ENCODE measurements at regions of chrX and their contacts with region 1.

Region 1: DNA sequence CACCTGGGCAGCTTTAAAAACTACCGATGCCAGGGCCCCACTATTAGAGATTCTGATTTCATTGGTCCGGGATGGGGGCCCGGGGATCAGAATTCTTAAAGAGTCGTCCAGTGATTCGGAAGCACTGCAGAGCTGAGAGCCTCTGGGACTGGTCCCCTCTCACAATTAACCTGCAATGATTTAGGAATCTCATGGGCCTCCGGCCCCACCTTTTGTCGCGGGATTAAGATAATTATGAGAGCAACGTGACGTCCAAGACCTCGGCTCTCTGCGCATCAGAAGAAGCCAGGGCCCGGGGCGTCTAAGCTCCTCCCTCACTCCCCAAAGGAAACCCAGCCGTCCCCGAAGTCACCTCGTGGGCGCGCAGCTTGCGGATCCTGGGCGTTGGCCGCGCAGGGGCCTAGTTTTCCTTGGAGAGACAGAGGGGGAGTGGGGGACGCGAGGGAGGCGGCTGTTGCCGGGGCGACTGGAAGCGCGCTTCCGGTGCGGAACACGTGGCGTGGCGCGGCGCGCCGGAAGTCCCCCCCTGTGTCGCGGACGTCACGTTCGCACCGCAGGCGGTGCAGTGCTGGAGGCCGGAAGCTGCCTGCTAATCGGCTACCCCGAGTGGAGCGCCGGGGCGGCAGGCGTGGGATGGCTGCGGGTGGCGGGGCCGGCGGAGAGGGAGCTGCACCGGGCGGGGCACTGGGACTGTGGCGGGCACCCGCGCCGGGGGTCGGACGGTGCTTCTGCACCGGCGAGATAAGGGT is at the start of gene GEMIN8:
- DNase-seq: peak; percentile 82
- H3K4me3 Mint-ChIP-seq: peak within 1 kb of the TSS; percentile 98
- H3K27ac Mint-ChIP-seq: peak within 1 kb of the TSS; percentile 99
- H3K4me1 Mint-ChIP-seq: peaks cover 30% of the 10 kb centered on the region
- H3K27me3 Mint-ChIP-seq: no peaks in the 10 kb centered on the region
- total RNA-seq, gene GEMIN8: 4.7 to 5.1 TPM

Region 2: DNA sequence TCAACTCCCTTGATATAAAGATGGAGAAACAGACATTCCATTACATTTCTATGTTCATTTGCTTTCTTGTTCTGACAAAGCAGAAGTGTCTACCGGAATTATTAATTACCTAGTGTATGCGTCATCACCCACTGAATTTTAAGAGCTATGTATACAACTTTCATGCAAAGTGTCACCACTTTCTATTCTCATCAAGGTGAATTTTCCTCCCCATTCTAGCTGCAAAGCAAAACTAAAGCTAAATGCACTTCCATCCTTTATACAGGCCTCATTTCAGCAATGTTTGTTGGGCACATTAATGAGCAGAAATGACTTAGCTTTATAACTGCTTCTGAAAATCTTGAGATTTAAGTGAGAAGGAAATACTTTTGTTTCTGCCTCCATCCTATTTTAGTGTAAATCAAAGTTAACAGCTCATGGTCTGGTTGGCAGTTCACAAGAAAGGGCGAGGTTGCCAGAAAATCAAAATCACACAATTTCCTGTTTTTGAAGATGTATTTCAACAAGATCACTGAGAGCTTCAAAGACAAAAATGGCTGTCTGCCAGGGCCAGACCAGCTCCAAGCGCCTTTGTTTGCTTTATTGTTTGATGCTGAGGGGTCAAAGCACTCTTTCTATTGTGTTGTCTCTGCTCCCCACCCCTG is 977.9 kb before region 1 on chrX:
- CTCF ChIA-PET with region 1: no interaction called
- intact Hi-C with region 1: loop called (anchors 5 kb)
- DNase-seq: peak; percentile 43
- H3K4me3 Mint-ChIP-seq: peak overlapping the region; percentile 36
- H3K27ac Mint-ChIP-seq: peak overlapping the region; percentile 95
- H3K4me1 Mint-ChIP-seq: peaks cover 77% of the 10 kb centered on the region
- H3K27me3 Mint-ChIP-seq: no peaks in the 10 kb centered on the region

Region 3: DNA sequence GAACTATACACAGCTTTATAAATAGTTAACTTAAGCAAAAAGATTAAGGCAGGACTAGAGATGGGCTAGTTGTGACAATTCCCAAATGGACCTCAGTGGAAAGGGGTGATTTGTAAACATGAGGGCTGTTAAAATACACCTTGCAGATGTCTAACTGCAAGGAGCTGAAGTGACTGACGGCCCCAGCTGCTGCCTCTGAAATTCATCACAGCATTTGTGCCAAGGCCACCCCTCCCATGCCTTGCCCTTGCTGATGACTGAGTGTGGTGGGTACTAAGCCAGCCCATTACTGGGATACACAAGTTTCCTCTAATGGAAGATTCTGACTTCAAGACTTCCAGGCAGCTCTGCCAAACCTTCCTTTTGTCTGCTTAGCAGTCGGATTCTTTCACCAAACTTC is 483.9 kb before region 1 on chrX:
- CTCF ChIA-PET with region 1: no interaction called
- intact Hi-C with region 1: loop called (anchors 1 kb)
- DNase-seq: no peak
- H3K4me3 Mint-ChIP-seq: no peak overlapping the region
- H3K27ac Mint-ChIP-seq: no peak overlapping the region
- H3K4me1 Mint-ChIP-seq: peaks cover 13% of the 10 kb centered on the region
- H3K27me3 Mint-ChIP-seq: peaks cover 2% of the 10 kb centered on the region

Region 4: DNA sequence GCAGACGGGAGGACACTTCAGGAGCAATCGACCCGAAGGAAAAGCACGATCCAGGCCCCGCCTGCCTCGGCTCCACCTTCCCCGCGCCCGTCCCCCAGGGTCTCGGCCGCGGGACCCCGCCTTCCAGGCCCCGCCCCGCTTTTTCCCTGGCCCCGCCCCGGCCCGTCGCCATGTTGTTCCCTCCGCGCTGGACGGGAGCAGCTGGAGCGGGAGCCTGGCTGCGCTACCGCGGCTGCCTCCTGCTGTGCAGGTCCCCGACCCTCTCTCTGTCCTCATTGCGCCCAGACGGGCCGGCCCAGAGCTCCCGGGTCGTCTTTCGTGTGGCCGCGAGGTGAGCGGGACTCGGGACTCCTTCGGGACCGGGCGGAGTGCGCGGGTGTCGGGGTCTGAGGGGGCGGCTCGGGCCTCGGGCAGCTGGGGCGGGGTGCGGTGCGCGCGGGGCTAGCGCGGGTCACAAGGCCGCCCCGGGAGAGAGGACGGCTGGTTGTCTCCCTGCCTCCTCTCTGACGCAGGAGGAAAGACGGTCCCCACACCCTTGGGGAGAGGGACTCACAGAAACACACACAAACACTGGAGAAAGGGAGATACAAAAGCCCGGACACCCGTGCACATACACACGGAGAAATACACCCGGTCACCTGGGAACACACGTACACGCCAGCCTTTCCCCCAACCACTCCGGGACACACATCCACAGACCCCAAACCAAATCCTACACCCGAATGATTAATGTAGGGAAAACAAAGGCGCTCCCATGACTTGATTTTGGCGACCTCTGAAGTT is 340.4 kb before region 1 on chrX and contains the start of gene RAB9A:
- CTCF ChIA-PET with region 1: no interaction called
- intact Hi-C with region 1: loop called (anchors 1 kb)
- DNase-seq: peak; percentile 83
- H3K4me3 Mint-ChIP-seq: peak within 1 kb of the TSS; percentile 82
- H3K27ac Mint-ChIP-seq: peak within 1 kb of the TSS; percentile 96
- H3K4me1 Mint-ChIP-seq: peaks cover 65% of the 10 kb centered on the region
- H3K27me3 Mint-ChIP-seq: no peaks in the 10 kb centered on the region
- total RNA-seq, gene RAB9A: 22.8 to 23.3 TPM

Region 5: DNA sequence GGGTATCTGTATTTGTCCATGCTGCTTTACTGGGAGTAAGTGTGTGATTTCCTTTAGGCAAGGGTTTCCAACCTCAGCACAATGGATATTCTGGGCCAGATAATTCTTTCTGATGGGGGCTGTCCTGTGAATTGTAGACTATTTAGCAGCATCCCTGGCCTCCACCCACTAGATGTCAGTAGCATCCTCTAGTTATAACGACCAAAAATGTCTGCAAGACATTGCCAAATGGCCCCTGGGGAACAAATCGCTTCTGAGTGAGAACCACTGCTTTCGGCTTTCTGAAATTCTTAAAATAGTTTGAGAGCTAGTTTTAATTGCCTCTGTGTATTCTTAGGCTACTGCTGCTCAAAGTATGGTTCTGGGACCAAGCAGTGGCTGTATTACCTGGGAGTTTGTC is 131.5 kb before region 1 on chrX:
- CTCF ChIA-PET with region 1: interaction called, 7 read pairs
- intact Hi-C with region 1: loop called (anchors 1 kb)
- DNase-seq: peak; percentile 15
- H3K4me3 Mint-ChIP-seq: no peak overlapping the region
- H3K27ac Mint-ChIP-seq: no peak overlapping the region
- H3K4me1 Mint-ChIP-seq: peaks cover 2% of the 10 kb centered on the region
- H3K27me3 Mint-ChIP-seq: no peaks in the 10 kb centered on the region

Region 6: GRCh38 chrX:14872851-14873675 is 843.5 kb after region 1 on chrX and contains the starts of genes FANCB and MOSPD2:
- CTCF ChIA-PET with region 1: no interaction called
- intact Hi-C with region 1: loop called (anchors 1 kb)
- DNase-seq: peak; percentile 95
- H3K4me3 Mint-ChIP-seq: peak within 1 kb of the TSS; percentile 77
- H3K27ac Mint-ChIP-seq: peak within 1 kb of the TSS; percentile 75
- H3K4me1 Mint-ChIP-seq: peaks cover 26% of the 10 kb centered on the region
- H3K27me3 Mint-ChIP-seq: no peaks in the 10 kb centered on the region
- total RNA-seq, gene FANCB: 16.5 to 17.9 TPM
- total RNA-seq, gene MOSPD2: 16.0 to 16.1 TPM

Measured in activated naive CD4-positive, alpha-beta T cell treated with anti-CD3 and anti-CD28 coated beads for 36 hours (primary cell).